Activated CD4-positive, alpha-beta T cell treated with anti-CD3 and anti-CD28 coated beads, Interleukin-2, amount 10 ng/mL, durations not matched to agents 24 days and 14 days (primary cell): ENCODE measurements at regions of chr7 and their contacts with region 1.

Region 1: DNA sequence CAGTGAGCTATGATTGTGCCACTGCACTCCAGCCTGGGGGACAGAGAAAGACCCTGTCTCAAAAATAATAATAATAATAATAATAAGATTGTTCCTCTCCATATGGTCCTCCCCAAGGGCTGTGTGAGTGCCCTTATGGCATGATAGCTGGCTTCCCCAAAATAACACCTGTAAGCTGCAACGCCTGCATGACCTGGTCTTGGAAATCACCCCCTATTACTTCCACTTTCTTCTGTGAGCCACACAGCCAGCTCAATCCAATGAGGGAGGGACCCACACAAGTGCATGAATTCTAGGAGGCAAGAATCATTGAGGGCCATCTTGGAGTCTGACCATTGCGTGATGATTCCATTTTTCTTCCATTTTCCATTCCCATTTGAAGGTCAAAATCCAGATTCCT is 82.7 kb upstream of the CALN1 start:
- DNase-seq: no peak
- H3K4me3 Mint-ChIP-seq: no peak overlapping the region
- H3K27ac Mint-ChIP-seq: no peak overlapping the region
- H3K4me1 Mint-ChIP-seq: no peaks in the 10 kb centered on the region
- H3K27me3 Mint-ChIP-seq: no peaks in the 10 kb centered on the region

Region 2: GRCh38 chr7:72476608-72477305 is 18.1 kb before region 1 on chr7:
- intact Hi-C with region 1: no loop called
- DNase-seq: no peak
- H3K4me3 Mint-ChIP-seq: no peak overlapping the region
- H3K27ac Mint-ChIP-seq: no peak overlapping the region
- H3K4me1 Mint-ChIP-seq: no peaks in the 10 kb centered on the region
- H3K27me3 Mint-ChIP-seq: no peaks in the 10 kb centered on the region

Region 3: DNA sequence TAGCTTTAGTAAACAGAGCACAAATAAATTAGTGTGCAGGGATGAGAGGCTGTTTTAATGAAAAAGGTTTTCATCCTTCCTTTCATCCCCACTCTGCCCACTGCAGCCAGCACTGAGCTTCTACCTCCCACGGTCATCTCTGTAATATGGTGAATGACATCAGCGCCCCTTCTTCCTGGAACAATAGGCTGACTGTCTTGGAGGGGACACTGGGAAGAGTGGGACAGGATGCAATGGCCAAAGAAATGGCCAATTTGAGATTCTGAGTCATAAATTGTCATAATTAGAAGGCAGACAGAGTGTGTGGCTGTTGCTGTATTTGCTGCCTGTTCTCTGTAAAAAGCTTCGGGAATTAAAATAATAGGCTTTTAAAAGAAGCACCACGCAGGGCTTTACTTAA is 44.0 kb after region 1 on chr7:
- intact Hi-C with region 1: no loop called
- DNase-seq: no peak
- H3K4me3 Mint-ChIP-seq: no peak overlapping the region
- H3K27ac Mint-ChIP-seq: no peak overlapping the region
- H3K4me1 Mint-ChIP-seq: no peaks in the 10 kb centered on the region
- H3K27me3 Mint-ChIP-seq: no peaks in the 10 kb centered on the region

Region 4: GRCh38 chr7:72785166-72785955 is 290.6 kb after region 1 on chr7:
- intact Hi-C with region 1: loop called (anchors 5 kb)
- DNase-seq: no peak
- H3K4me3 Mint-ChIP-seq: no peak overlapping the region
- H3K27ac Mint-ChIP-seq: no peak overlapping the region
- H3K4me1 Mint-ChIP-seq: no peaks in the 10 kb centered on the region
- H3K27me3 Mint-ChIP-seq: no peaks in the 10 kb centered on the region